ENCODE measurements at regions of chr11 and their contacts with region 1.

Region 1: GRCh38 chr11:34185926-34186841 is 80.8 kb downstream of the NAT10 start:
- DNase-seq: no peak
- ATAC-seq: peak in 3 of 8 donors; percentile 26 to 43 (median 32)
- H3K4me3 ChIP-seq: no peak overlapping the region
- H3K27ac ChIP-seq: no peak overlapping the region
- H3K4me1 ChIP-seq: peaks cover 4 to 30% (median 10%) of the 10 kb centered on the region in 9 donors
- H3K27me3 ChIP-seq: no peaks in the 10 kb centered on the region
- CTCF ChIP-seq: no peak

Region 2: GRCh38 chr11:34250732-34251639 is 64.8 kb after region 1 on chr11:
- intact Hi-C with region 1: loop called in 2 of 10 experiments (anchors 10 kb)
- DNase-seq: peak; percentile 56 to 70
- ATAC-seq: peak; percentile 85 to 97 (median 92)
- H3K4me3 ChIP-seq: peak overlapping the region in 6 of 10 donors; percentile 21 to 35 (median 26)
- H3K27ac ChIP-seq: peak overlapping the region in 8 of 10 donors; percentile 22 to 70 (median 52)
- H3K4me1 ChIP-seq: peaks cover 0 to 30% (median 23%) of the 10 kb centered on the region in 9 donors
- H3K27me3 ChIP-seq: no peaks in the 10 kb centered on the region
- CTCF ChIP-seq: no peak